ENCODE measurements at regions of chr14 and their contacts with region 1.

Region 1: DNA sequence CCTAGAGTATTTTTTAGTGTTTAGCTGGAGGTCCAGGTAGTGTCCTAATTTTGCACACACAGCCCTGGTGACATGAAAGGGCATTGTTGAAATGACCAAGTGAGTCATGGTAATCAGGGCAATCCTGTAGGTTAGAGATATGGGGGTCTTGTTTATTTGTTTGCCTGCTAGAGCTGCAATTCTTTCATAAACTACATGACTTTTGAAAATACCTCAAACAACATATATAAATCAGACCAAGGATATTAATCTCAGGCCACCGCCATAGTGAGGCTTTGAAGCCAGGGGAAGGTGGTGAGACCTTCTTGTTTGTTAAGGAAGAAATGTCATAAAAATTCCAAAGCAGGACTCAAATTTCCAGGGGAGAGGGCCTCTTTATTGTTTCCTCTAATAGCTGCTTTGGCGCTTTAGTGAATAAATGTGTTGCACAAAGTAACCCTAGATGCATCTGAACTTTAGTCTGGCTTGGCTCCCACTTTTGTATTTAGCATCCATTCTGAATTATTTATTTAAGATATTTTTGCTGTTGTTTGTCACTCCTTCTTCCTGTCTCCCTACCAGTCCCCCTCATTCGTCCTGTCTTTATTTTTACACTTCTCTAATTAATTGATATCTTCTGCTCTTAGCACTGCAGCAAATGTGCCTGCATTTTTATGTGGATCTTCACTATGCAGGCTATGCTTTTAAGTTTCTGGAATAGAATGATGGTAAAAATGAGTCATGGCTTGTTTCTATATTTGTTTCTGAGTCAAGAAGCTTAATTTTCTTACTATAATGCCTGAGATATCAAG is 430.3 kb downstream of the RAD51B start:
- DNase-seq: peak; percentile 80
- H3K4me3 ChIP-seq: no peak overlapping the region
- CTCF ChIP-seq: no peak

Region 2: DNA sequence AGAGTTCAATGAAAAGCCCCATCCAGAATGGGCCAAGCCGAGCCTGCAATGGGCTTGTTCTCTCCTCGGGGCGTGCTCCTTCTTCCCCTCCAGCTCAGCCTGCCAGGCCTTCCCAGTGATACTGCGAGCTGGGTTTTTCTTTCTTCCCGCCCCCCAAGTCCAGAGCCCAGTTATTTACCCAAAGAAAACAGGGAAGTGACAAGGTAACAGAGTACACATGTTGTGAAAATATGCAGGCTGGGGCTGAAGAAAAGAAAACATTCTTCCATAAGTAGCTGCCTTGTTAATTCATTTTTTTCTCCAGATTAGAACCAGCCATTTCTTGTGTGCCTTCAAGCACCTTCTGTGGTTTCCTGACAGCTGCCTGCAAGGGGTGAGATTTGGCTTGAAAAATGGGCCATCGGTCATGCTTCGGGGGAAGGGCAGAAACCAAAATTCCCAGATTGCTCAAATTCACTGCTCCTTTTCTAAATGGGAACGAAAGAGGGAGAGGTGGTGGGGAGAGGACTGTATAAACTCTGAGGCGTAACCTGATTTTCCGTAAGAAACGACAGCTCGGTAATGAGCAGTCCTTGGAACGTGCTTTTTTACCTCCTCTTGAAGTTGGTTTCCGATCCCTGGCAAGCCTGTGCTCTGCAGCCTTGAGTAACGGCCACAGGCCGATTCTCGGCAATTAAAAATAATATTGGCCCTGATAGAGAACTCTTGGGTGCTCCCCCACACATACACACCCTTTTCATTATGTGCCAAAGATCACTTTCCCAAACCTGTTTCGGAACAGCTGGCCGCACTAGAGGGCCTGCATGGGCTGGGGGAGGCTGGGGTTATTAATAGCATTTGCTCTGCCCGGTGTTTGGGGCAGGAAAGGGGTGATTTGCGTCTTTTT is 313.6 kb after region 1 on chr14:
- in situ Hi-C with region 1: loop called (anchors 10 kb)
- DNase-seq: no peak
- H3K4me3 ChIP-seq: no peak overlapping the region
- CTCF ChIP-seq: no peak